AG04450 (cell line): ENCODE measurements at regions of chr10 and their contacts with region 1.

Region 1: DNA sequence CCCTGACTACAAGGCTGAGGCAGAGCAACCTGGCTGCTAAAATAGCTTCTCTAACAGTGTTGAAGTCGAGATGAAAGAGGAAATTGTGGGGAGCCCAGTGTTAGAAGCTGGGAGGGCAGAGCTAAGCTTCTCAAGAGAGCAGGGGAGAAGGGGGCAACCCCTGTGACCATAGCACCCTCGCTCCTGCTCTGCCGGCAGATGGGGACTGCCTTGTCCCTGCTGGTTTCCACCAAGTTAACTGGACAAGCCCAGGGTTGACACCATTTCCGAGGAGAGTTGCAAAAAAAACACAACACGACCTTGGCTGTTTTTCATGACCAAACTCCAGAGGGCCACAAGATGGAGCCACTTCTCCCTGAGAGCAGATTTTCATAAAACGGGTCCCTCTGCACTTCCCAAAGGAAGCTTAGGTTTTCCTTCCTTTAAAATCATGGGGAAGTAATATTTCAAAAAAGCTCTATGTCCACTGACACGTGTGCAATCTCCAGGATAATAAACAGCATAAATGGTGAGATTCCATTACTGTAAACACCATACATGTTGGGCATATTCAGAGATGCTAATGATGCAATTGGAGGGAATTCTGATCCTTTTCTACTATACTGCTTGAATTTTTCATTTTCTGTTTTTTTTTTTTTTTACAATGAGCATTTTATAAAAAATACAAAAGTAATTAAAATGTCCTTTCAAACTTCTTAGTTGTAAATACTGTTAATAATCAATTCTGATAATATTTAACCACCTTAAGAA is 140.4 kb downstream of the PIP4K2A start:
- DNase-seq: no peak
- H3K4me3 ChIP-seq: no peak overlapping the region
- H3K27ac ChIP-seq: no peak overlapping the region
- H3K27me3 ChIP-seq: no peaks in the 10 kb centered on the region
- CTCF ChIP-seq: peak; percentile 60

Region 2: GRCh38 chr10:22010973-22011408 is 563.0 kb before region 1 on chr10:
- CTCF ChIA-PET with region 1: interaction called, 10 read pairs
- POLR2A ChIA-PET with region 1: no interaction called
- DNase-seq: no peak
- H3K4me3 ChIP-seq: no peak overlapping the region
- H3K27ac ChIP-seq: no peak overlapping the region
- H3K27me3 ChIP-seq: no peaks in the 10 kb centered on the region
- CTCF ChIP-seq: no peak

Region 3: GRCh38 chr10:22589851-22590514 is 16.0 kb after region 1 on chr10:
- CTCF ChIA-PET with region 1: interaction called, 11 read pairs
- POLR2A ChIA-PET with region 1: no interaction called
- DNase-seq: no peak
- H3K4me3 ChIP-seq: no peak overlapping the region
- H3K27ac ChIP-seq: no peak overlapping the region
- H3K27me3 ChIP-seq: no peaks in the 10 kb centered on the region
- CTCF ChIP-seq: no peak